Endothelial cell of umbilical vein (primary cell): ENCODE measurements at regions of chr11 and their contacts with region 1.

Region 1: DNA sequence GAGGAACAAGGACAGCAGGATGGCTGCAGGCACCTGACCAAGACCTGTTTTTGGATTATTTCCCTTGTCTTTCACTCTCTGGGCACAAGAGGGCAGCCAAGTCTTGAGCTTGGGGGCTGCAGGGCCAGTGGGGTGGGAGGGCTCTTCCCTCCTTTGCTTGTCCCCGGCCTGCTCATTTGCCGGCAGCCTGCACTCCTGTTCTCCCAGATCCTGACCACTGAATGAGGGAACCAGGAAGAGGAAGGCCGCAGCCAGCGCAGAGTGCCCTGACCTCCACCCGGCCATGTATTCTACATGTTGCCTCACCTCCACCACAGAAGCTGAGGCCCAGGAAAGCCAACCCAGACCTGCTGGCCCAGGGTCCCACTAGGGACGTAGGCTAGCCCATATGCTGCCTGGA is 15.5 kb upstream of the NNMT start:
- DNase-seq: peak; percentile 90
- H3K4me3 ChIP-seq: no peak overlapping the region
- H3K27ac ChIP-seq: peak overlapping the region; percentile 40
- H3K4me1 ChIP-seq: peaks cover 25% of the 10 kb centered on the region
- H3K27me3 ChIP-seq: peaks cover 0 to 8% of the 10 kb centered on the region in 2 experiments
- CTCF ChIP-seq: peak; percentile 71 to 80
- POLR2A ChIP-seq: no peak

Region 2: GRCh38 chr11:114183044-114183511 is 97.6 kb before region 1 on chr11:
- CTCF ChIA-PET with region 1: no interaction called
- POLR2A ChIA-PET with region 1: no interaction called
- dilution Hi-C with region 1: no loop called
- intact Hi-C with region 1: no loop called
- DNase-seq: no peak
- H3K4me3 ChIP-seq: no peak overlapping the region
- H3K27ac ChIP-seq: no peak overlapping the region
- H3K4me1 ChIP-seq: peaks cover 24% of the 10 kb centered on the region
- H3K27me3 ChIP-seq: no peaks in the 10 kb centered on the region
- CTCF ChIP-seq: no peak
- POLR2A ChIP-seq: no peak

Region 3: DNA sequence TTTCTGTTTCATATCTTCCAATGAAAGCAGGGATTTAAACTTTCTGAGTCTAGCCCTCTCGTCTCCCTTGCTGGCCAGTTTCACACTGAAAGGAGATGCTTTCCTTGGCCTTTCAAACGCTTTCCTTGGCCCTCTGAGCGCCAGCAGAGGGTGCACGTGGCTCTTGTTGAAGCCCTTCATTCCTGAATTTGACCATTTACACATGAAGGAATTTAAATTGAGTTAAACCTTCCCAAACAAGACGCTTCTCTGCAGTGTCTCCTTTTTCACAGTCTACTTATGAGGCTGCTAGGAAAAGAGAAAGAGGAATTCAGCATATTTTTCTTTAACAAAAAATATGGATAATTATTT is 37.1 kb after region 1 on chr11:
- CTCF ChIA-PET with region 1: interaction called, 19 read pairs
- POLR2A ChIA-PET with region 1: no interaction called
- dilution Hi-C with region 1: no loop called
- intact Hi-C with region 1: loop called (anchors 1 kb)
- DNase-seq: peak; percentile 73
- H3K4me3 ChIP-seq: no peak overlapping the region
- H3K27ac ChIP-seq: no peak overlapping the region
- H3K4me1 ChIP-seq: peaks cover 26% of the 10 kb centered on the region
- H3K27me3 ChIP-seq: no peaks in the 10 kb centered on the region
- CTCF ChIP-seq: peak; percentile 50 to 62
- POLR2A ChIP-seq: no peak

Region 4: GRCh38 chr11:114400217-114400914 is 119.7 kb after region 1 on chr11 and contains the starts of genes C11orf71 and RBM7:
- CTCF ChIA-PET with region 1: interaction called, 16 read pairs
- POLR2A ChIA-PET with region 1: no interaction called
- dilution Hi-C with region 1: no loop called
- intact Hi-C with region 1: loop called (anchors 1 kb)
- DNase-seq: peak; percentile 99
- H3K4me3 ChIP-seq: peak within 1 kb of the TSS; percentile 66 to 84 (median 79)
- H3K27ac ChIP-seq: peak within 1 kb of the TSS; percentile 86
- H3K4me1 ChIP-seq: peaks cover 27% of the 10 kb centered on the region
- H3K27me3 ChIP-seq: no peaks in the 10 kb centered on the region
- CTCF ChIP-seq: no peak
- POLR2A ChIP-seq: peak; percentile 98
- total RNA-seq, gene C11orf71: 4.0 and 5.4 TPM in 2 replicates
- total RNA-seq, gene RBM7: 31.3 and 38.4 TPM in 2 replicates

Region 5: DNA sequence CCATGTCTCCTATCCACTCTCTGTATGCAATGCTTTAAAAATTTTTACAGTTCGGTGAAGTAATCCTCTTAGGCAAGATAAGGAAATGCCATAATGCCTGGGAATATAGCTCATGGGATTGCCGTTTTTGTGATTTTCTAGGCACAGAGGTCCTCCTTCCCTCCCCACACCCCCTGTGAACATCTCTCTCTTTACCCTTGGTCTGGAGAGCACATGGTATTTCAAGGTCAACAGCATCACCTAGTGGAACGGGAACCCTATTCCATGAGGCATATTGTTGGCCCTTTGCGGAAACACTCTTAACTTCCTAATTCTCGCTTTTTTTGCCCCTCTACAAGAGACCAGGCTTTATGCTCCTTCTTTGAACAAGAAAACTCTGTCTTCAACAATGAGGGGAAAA is 306.1 kb after region 1 on chr11:
- CTCF ChIA-PET with region 1: no interaction called
- POLR2A ChIA-PET with region 1: no interaction called
- dilution Hi-C with region 1: no loop called
- intact Hi-C with region 1: loop called (anchors 1 kb)
- DNase-seq: no peak
- H3K4me3 ChIP-seq: no peak overlapping the region
- H3K27ac ChIP-seq: no peak overlapping the region
- H3K4me1 ChIP-seq: no peaks in the 10 kb centered on the region
- H3K27me3 ChIP-seq: no peaks in the 10 kb centered on the region
- CTCF ChIP-seq: no peak
- POLR2A ChIP-seq: no peak

Region 6: DNA sequence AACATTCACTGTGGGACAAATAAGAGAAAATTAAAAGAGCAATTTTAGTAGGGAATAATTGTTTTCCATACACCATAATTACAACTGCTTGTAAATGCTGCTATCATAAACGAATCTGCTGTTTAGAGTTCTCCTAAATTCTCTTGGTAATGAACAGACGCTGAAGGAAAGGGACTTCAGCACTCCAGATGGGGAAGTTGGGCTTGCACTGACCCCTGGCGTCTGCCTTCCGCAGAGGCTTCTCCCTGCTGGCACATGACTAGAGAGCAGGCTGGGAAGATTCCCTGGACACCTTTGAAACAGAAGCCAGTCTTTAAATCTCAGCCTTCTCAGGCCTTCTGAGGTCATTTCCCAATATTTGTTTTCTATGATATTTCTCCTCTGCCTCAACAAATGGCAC is 481.7 kb after region 1 on chr11:
- CTCF ChIA-PET with region 1: interaction called, 8 read pairs
- POLR2A ChIA-PET with region 1: no interaction called
- dilution Hi-C with region 1: no loop called
- intact Hi-C with region 1: loop called (anchors 1 kb)
- DNase-seq: peak; percentile 47
- H3K4me3 ChIP-seq: no peak overlapping the region
- H3K27ac ChIP-seq: no peak overlapping the region
- H3K4me1 ChIP-seq: no peaks in the 10 kb centered on the region
- H3K27me3 ChIP-seq: no peaks in the 10 kb centered on the region
- CTCF ChIP-seq: peak; percentile 51 to 75
- POLR2A ChIP-seq: no peak